Left ventricle myocardium superior (tissue), 1 donor: ENCODE measurements at regions of chr17 and their contacts with region 1.

Region 1: GRCh38 chr17:55845385-55845784 is 94.5 kb downstream of the PCTP start:
- DNase-seq: peak; percentile 72
- ATAC-seq: peak; percentile 95

Region 2: DNA sequence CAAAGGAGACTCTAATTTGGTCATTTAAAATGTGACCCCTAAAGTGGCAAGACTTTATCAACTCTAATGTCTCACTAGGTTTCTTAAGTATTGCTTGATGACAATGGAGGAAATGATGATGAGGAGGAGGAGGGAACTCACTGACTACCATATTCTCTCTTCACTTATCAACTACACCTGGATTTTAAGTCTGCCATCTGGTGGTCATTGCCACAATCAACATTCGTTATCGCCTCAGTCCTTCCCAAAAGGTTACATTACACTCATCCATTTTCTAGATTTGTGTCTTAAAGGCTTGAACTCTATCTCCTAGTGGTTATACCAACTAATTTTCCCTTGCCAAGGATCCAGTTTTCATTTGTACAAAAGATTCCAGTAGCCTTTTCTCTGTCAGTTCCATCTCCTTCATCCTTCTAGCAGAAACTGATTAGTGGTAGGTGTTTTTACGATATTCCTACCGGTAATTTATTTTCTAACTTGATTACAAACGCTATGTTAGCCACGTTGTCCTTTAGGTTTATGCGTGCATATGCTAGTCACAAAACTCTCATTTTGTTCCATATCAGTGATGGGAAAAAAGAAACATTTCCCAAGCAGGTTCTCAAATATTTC is 633.6 kb after region 1 on chr17:
- intact Hi-C with region 1: loop called (anchors 10 kb)
- DNase-seq: no peak
- ATAC-seq: no peak